PC-3 (cell line): ENCODE measurements at regions of chr7 and their contacts with region 1.

Region 1: DNA sequence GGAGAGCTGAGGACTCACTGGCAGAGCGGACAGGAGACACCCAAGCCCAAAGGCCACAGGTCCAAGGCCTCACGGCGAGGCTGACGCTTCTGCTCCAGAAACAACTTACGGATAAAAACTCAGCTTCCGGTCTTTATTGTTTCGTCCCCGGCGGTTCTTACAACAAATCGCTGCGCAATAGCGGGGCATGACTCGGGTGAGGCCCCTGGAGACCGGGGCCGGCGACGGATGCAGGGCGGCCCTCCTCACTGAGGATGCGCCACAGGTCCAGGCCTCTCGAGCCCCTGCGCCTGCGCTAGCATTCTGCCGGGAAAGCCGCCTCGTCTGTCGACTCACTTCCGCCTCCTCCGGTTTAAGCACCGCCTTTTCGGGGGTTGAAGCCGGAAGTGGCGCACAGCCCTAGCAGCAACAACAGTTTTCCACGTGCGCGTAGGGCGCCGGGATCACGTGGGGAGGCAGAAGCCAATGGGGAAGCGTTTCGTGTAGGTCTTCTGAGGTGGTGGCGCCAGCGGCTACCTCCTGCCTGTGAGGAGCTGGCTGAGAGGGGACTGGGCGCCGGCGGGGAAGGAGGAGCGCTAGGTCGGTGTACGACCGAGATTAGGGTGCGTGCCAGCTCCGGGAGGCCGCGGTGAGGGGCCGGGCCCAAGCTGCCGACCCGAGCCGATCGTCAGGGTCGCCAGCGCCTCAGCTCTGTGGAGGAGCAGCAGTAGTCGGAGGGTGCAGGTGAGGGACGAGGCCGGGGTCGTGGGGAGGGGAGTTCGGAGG is at the starts of genes DNAJB9 and THAP5:
- DNase-seq: peak; percentile 98
- ATAC-seq: peak; percentile 94
- H3K4me3 ChIP-seq: peak within 1 kb of the TSS; percentile 73
- H3K27ac ChIP-seq: peak within 1 kb of the TSS; percentile 71
- H3K4me1 ChIP-seq: peaks cover 17% of the 10 kb centered on the region
- H3K27me3 ChIP-seq: no peaks in the 10 kb centered on the region
- CTCF ChIP-seq: no peak
- total RNA-seq, gene DNAJB9: 19.2 and 24.0 TPM in 2 replicates
- total RNA-seq, gene THAP5: 8.1 and 11.8 TPM in 2 replicates

Region 2: GRCh38 chr7:108335272-108335918 is 234.2 kb before region 1 on chr7:
- CTCF ChIA-PET with region 1: interaction called, 12 read pairs
- POLR2A ChIA-PET with region 1: no interaction called
- intact Hi-C with region 1: no loop called
- DNase-seq: no peak
- ATAC-seq: no peak
- H3K4me3 ChIP-seq: no peak overlapping the region
- H3K27ac ChIP-seq: no peak overlapping the region
- H3K4me1 ChIP-seq: no peaks in the 10 kb centered on the region
- H3K27me3 ChIP-seq: peaks cover 31% of the 10 kb centered on the region
- CTCF ChIP-seq: no peak

Region 3: GRCh38 chr7:108477696-108478095 is 91.9 kb before region 1 on chr7:
- CTCF ChIA-PET with region 1: no interaction called
- POLR2A ChIA-PET with region 1: no interaction called
- intact Hi-C with region 1: no loop called
- DNase-seq: no peak
- ATAC-seq: no peak
- H3K4me3 ChIP-seq: no peak overlapping the region
- H3K27ac ChIP-seq: no peak overlapping the region
- H3K4me1 ChIP-seq: no peaks in the 10 kb centered on the region
- H3K27me3 ChIP-seq: no peaks in the 10 kb centered on the region
- CTCF ChIP-seq: no peak

Region 4: GRCh38 chr7:108848486-108848885 is 278.9 kb after region 1 on chr7:
- CTCF ChIA-PET with region 1: no interaction called
- POLR2A ChIA-PET with region 1: no interaction called
- intact Hi-C with region 1: no loop called
- DNase-seq: no peak
- ATAC-seq: no peak
- H3K4me3 ChIP-seq: no peak overlapping the region
- H3K27ac ChIP-seq: no peak overlapping the region
- H3K4me1 ChIP-seq: no peaks in the 10 kb centered on the region
- H3K27me3 ChIP-seq: no peaks in the 10 kb centered on the region
- CTCF ChIP-seq: no peak